ENCODE measurements at regions of chr1 and their contacts with region 1.

Region 1: GRCh38 chr1:84506002-84506728 is at the starts of genes GNG5 and SPATA1:
- DNase-seq: peak; percentile 98
- ATAC-seq: peak; percentile 88
- H3K4me3 ChIP-seq: peak within 1 kb of the TSS; percentile 82 to 98 (median 90)
- H3K4me3 Mint-ChIP-seq: peak within 1 kb of the TSS; percentile 95
- H3K27ac ChIP-seq: peak within 1 kb of the TSS; percentile 82 to 89
- H3K27ac Mint-ChIP-seq: peak within 1 kb of the TSS; percentile 98
- H3K4me1 ChIP-seq: peaks cover 23 to 27% of the 10 kb centered on the region in 2 donors
- H3K4me1 Mint-ChIP-seq: peaks cover 35% of the 10 kb centered on the region
- H3K27me3 ChIP-seq: no peaks in the 10 kb centered on the region
- H3K27me3 Mint-ChIP-seq: no peaks in the 10 kb centered on the region
- CTCF ChIP-seq: no peak
- total RNA-seq, gene GNG5: 36.0 and 41.6 TPM in 2 replicates
- total RNA-seq, gene SPATA1: 6.4 and 8.6 TPM in 2 replicates

Region 2: DNA sequence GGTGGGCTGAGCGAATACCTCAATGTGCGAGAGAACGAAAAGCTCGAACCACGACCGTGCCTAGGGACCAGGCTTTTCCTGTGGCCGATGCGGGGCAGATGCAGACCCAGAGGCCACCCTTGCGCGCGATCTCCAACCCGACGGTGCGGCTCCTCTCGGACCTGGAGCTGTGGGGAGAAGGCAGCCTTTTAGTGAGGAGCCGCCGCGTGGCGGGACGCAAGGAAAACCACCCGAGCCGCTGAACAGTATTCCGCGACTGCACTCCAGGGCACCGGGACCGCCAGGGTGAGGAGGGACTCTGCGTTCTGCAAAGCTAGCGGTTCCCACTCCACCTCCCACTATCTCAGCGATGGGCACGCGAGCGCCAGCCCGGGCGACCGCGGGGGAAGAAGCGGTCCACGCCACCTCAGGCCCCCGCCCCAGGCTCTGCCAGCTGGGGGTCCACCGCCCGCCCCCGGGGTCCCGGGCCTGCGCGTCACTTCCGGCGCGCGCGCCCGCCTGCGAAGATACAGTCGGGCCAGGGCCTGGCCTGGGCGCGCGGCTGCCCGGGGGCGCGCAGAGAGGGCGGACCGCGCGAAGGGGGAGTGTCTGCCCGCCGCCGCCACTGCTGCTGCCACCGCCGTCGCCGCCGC is 428.6 kb before region 1 on chr1:
- CTCF ChIA-PET with region 1: no interaction called
- POLR2A ChIA-PET with region 1: no interaction called
- intact Hi-C with region 1: loop called (anchors 1 kb)
- DNase-seq: peak; percentile 85
- ATAC-seq: peak; percentile 93
- H3K4me3 ChIP-seq: peak overlapping the region; percentile 41 to 86 (median 68)
- H3K4me3 Mint-ChIP-seq: peak overlapping the region; percentile 84
- H3K27ac ChIP-seq: peak overlapping the region; percentile 46 to 70
- H3K27ac Mint-ChIP-seq: peak overlapping the region; percentile 67
- H3K4me1 ChIP-seq: peaks cover 7 to 12% of the 10 kb centered on the region in 2 donors
- H3K4me1 Mint-ChIP-seq: peaks cover 13% of the 10 kb centered on the region
- H3K27me3 ChIP-seq: no peaks in the 10 kb centered on the region
- H3K27me3 Mint-ChIP-seq: no peaks in the 10 kb centered on the region
- CTCF ChIP-seq: no peak

Region 3: GRCh38 chr1:84433258-84434080 is 72.7 kb before region 1 on chr1:
- CTCF ChIA-PET with region 1: interaction called, 5 read pairs
- POLR2A ChIA-PET with region 1: interaction called, 8 read pairs
- intact Hi-C with region 1: loop called (anchors 2 kb)
- DNase-seq: peak; percentile 78
- ATAC-seq: peak; percentile 34
- H3K4me3 ChIP-seq: peak overlapping the region in 4 of 5 experiments; percentile 19 to 43 (median 32)
- H3K4me3 Mint-ChIP-seq: peak overlapping the region; percentile 79
- H3K27ac ChIP-seq: peak overlapping the region in 1 of 2 donors; percentile 55
- H3K27ac Mint-ChIP-seq: peak overlapping the region; percentile 20
- H3K4me1 ChIP-seq: peaks cover 40 to 43% of the 10 kb centered on the region in 2 donors
- H3K4me1 Mint-ChIP-seq: peaks cover 9% of the 10 kb centered on the region
- H3K27me3 ChIP-seq: no peaks in the 10 kb centered on the region
- H3K27me3 Mint-ChIP-seq: no peaks in the 10 kb centered on the region
- CTCF ChIP-seq: peak; percentile 70

Region 4: GRCh38 chr1:84478876-84479868 is 27.0 kb before region 1 on chr1 and contains the start of gene RPF1:
- CTCF ChIA-PET with region 1: interaction called, 4 read pairs
- POLR2A ChIA-PET with region 1: interaction called, 13 read pairs
- intact Hi-C with region 1: loop called (anchors 1 kb)
- DNase-seq: peak; percentile 88
- ATAC-seq: peak; percentile 95
- H3K4me3 ChIP-seq: peak within 1 kb of the TSS; percentile 66 to 90 (median 88)
- H3K4me3 Mint-ChIP-seq: peak within 1 kb of the TSS; percentile 94
- H3K27ac ChIP-seq: peak within 1 kb of the TSS; percentile 78 to 81
- H3K27ac Mint-ChIP-seq: peak within 1 kb of the TSS; percentile 91
- H3K4me1 ChIP-seq: peaks cover 19 to 32% of the 10 kb centered on the region in 2 donors
- H3K4me1 Mint-ChIP-seq: peaks cover 40% of the 10 kb centered on the region
- H3K27me3 ChIP-seq: peaks cover 0 to 24% (median 14%) of the 10 kb centered on the region in 4 experiments
- H3K27me3 Mint-ChIP-seq: peaks cover 30% of the 10 kb centered on the region
- CTCF ChIP-seq: no peak
- total RNA-seq, gene RPF1: 38.8 and 40.2 TPM in 2 replicates

Region 5: GRCh38 chr1:84525779-84526178 is 19.6 kb after region 1 on chr1:
- CTCF ChIA-PET with region 1: no interaction called
- POLR2A ChIA-PET with region 1: no interaction called
- intact Hi-C with region 1: no loop called
- DNase-seq: no peak
- ATAC-seq: no peak
- H3K4me3 ChIP-seq: no peak overlapping the region
- H3K4me3 Mint-ChIP-seq: no peak overlapping the region
- H3K27ac ChIP-seq: no peak overlapping the region
- H3K27ac Mint-ChIP-seq: no peak overlapping the region
- H3K4me1 ChIP-seq: no peaks in the 10 kb centered on the region
- H3K4me1 Mint-ChIP-seq: no peaks in the 10 kb centered on the region
- H3K27me3 ChIP-seq: no peaks in the 10 kb centered on the region
- H3K27me3 Mint-ChIP-seq: no peaks in the 10 kb centered on the region
- CTCF ChIP-seq: no peak

Region 6: DNA sequence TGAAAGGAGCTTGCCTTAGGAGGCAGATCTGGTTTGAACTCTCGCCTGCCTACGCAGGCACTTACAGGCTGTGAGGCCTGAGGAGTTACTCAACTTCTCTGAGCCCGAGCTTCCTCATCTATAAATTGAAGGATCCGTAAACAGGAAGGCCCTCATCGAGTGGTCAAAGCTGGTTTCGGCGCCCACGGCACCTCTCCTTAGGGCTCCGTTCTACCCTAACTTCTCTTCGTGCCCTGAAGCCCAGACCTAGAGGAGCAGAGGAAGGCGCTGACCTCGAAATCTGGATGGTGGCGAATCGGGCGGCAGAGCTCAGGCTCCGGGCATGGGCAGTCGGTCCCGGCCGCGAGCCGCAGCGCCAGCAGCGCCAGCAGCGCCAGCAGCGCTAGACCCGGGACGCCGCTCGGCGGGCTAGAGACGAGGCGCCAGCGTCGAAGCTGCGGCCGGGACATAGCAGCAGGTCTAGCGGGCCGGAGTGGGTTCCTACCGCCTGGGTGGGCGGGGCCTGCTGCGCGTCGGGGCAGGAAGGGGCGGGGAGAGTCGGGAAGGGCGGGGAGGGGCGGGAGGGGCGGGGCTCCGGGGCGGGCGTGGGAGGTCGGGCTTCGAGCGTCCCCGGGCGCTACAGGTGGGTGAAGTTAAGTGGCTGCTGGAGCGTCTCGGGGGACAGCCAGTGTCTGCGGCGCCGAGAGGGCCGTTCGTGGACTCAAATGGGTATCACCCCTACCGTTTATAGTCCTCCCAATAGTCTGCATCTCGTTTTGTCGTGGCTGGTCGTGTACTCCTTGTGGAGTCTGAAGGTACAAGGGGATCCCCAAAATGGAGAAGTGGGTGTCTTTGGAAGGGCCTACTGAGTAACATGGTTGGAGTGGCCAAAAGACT is 68.0 kb after region 1 on chr1 and contains the start of gene CTBS:
- CTCF ChIA-PET with region 1: interaction called, 11 read pairs
- POLR2A ChIA-PET with region 1: interaction called, 41 read pairs
- intact Hi-C with region 1: loop called (anchors 1 kb)
- DNase-seq: peak; percentile 93
- ATAC-seq: peak; percentile 95
- H3K4me3 ChIP-seq: peak within 1 kb of the TSS; percentile 59 to 94 (median 73)
- H3K4me3 Mint-ChIP-seq: peak within 1 kb of the TSS; percentile 100
- H3K27ac ChIP-seq: peak within 1 kb of the TSS; percentile 96 to 99
- H3K27ac Mint-ChIP-seq: peak within 1 kb of the TSS; percentile 100
- H3K4me1 ChIP-seq: peaks cover 26% of the 10 kb centered on the region in 2 donors
- H3K4me1 Mint-ChIP-seq: peaks cover 43% of the 10 kb centered on the region
- H3K27me3 ChIP-seq: no peaks in the 10 kb centered on the region
- H3K27me3 Mint-ChIP-seq: no peaks in the 10 kb centered on the region
- CTCF ChIP-seq: no peak
- total RNA-seq, gene CTBS: 19.1 and 19.9 TPM in 2 replicates

Region 7: GRCh38 chr1:84690397-84691121 is 184.4 kb after region 1 on chr1 and contains the start of gene SSX2IP:
- CTCF ChIA-PET with region 1: no interaction called
- POLR2A ChIA-PET with region 1: no interaction called
- intact Hi-C with region 1: loop called (anchors 1 kb)
- DNase-seq: peak; percentile 97
- ATAC-seq: peak; percentile 86
- H3K4me3 ChIP-seq: peak within 1 kb of the TSS; percentile 71 to 93 (median 85)
- H3K4me3 Mint-ChIP-seq: peak within 1 kb of the TSS; percentile 80
- H3K27ac ChIP-seq: peak within 1 kb of the TSS; percentile 56 to 64
- H3K27ac Mint-ChIP-seq: peak within 1 kb of the TSS; percentile 62
- H3K4me1 ChIP-seq: peaks cover 12 to 24% of the 10 kb centered on the region in 2 donors
- H3K4me1 Mint-ChIP-seq: peaks cover 27% of the 10 kb centered on the region
- H3K27me3 ChIP-seq: no peaks in the 10 kb centered on the region
- H3K27me3 Mint-ChIP-seq: no peaks in the 10 kb centered on the region
- CTCF ChIP-seq: no peak
- total RNA-seq, gene SSX2IP: 7.1 and 10.3 TPM in 2 replicates

Region 8: DNA sequence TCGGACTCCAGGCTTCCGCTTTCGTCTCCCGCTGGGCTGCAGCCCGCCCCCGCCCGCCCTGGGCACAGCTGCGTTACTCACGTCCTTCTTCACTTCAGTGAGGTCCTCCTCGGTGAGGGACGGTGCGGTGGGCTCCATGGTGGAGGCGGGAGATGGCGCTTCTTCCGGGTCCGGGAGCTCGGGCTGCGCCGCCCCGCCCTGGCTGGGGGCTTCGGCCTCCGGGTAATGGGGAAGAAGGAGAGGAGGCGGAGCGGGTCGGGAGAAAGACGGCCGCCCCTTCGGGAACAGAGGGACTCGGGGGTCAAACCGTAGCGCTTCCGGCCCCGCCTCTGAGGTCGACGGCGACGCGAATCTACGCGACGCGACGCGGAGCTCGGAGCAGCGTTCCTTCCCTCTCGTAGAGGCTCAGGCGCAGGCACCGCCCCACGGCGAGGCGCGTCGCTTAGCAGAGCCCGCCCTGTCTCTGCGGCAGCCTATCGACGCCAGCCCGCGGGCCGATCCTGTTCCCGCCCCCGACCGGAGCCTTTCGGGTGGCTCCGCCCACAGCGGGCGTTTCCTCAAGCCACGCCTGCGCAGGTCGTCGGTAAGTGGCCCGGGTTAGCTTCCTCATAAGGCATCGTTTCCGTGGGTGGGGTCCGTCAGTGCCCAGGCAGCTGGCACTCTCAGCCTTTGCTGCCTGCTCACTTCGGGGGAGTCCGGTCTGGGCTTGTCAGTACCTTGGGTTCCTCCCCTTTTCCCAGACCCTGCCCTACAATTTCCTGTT is 770.2 kb after region 1 on chr1 and contains the start of gene BCL10:
- CTCF ChIA-PET with region 1: no interaction called
- POLR2A ChIA-PET with region 1: interaction called, 3 read pairs
- intact Hi-C with region 1: loop called (anchors 5 kb)
- DNase-seq: peak; percentile 99
- ATAC-seq: peak; percentile 92
- H3K4me3 ChIP-seq: peak within 1 kb of the TSS; percentile 87 to 99 (median 98)
- H3K4me3 Mint-ChIP-seq: peak within 1 kb of the TSS; percentile 96
- H3K27ac ChIP-seq: peak within 1 kb of the TSS; percentile 99
- H3K27ac Mint-ChIP-seq: peak within 1 kb of the TSS; percentile 97
- H3K4me1 ChIP-seq: peaks cover 38 to 47% of the 10 kb centered on the region in 2 donors
- H3K4me1 Mint-ChIP-seq: peaks cover 55% of the 10 kb centered on the region
- H3K27me3 ChIP-seq: no peaks in the 10 kb centered on the region
- H3K27me3 Mint-ChIP-seq: no peaks in the 10 kb centered on the region
- CTCF ChIP-seq: no peak
- total RNA-seq, gene BCL10: 60.5 and 64.4 TPM in 2 replicates